ENCODE measurements at regions of chr9 and their contacts with region 1.

Region 1: GRCh38 chr9:16705121-16705604 is 165.3 kb downstream of the BNC2 start:
- DNase-seq: peak; percentile 99
- H3K4me3 ChIP-seq: peak overlapping the region in 2 of 3 experiments; percentile 57 to 97
- H3K27ac ChIP-seq: peak overlapping the region; percentile 99
- H3K4me1 ChIP-seq: peaks cover 51% of the 10 kb centered on the region
- H3K27me3 ChIP-seq: no peaks in the 10 kb centered on the region
- CTCF ChIP-seq: no peak
- POLR2A ChIP-seq: peak; percentile 44

Region 2: DNA sequence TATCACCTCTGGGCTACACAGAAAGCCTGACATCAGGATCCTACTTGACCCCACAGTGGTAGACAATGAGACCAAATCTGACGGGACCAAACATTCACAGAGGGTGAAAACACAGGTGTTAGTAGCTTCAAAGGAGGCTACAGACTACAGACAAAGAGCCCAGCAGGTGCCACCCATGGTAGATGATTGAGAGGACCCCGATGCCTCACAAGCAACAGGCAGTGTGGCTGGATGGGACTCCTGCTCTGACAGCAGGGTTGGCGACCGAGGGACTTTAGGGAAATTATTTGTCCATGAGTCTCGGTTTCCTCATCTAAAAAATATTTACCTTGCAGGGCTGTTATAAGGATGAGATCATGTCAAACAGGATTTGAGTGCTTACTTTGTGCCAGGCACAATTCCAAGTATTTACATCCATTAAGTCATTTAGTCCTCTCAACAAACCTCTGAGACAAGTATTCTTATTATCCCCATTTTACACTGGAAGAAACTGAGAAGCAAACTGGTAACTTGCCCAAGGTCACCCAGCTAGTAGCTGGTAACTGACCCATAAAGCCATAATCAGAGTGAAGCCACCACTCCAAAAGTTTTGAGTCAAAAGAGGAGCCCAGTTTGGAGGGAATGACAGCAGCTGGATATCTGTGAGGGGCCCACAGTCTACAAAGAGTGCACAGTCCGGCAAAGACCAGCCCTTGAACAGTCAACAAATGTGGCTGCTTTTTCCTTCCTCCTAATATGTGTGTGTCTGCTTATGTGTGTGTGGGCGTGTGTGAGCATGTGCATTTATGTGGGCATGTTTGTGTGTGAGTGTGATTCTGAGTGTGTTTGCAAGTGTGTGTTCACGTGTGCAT is 336.7 kb before region 1 on chr9:
- CTCF ChIA-PET with region 1: no interaction called
- POLR2A ChIA-PET with region 1: no interaction called
- dilution Hi-C with region 1: no loop called
- intact Hi-C with region 1: loop called (anchors 2 kb)
- DNase-seq: peak; percentile 28
- H3K4me3 ChIP-seq: no peak overlapping the region
- H3K27ac ChIP-seq: no peak overlapping the region
- H3K4me1 ChIP-seq: peaks cover 27% of the 10 kb centered on the region
- H3K27me3 ChIP-seq: no peaks in the 10 kb centered on the region
- CTCF ChIP-seq: no peak
- POLR2A ChIP-seq: no peak

Region 3: GRCh38 chr9:16530669-16531642 is 174.2 kb before region 1 on chr9:
- CTCF ChIA-PET with region 1: no interaction called
- POLR2A ChIA-PET with region 1: no interaction called
- dilution Hi-C with region 1: no loop called
- intact Hi-C with region 1: loop called (anchors 5 kb)
- DNase-seq: no peak
- H3K4me3 ChIP-seq: no peak overlapping the region
- H3K27ac ChIP-seq: no peak overlapping the region
- H3K4me1 ChIP-seq: peaks cover 34% of the 10 kb centered on the region
- H3K27me3 ChIP-seq: no peaks in the 10 kb centered on the region
- CTCF ChIP-seq: no peak
- POLR2A ChIP-seq: no peak

Region 4: GRCh38 chr9:16720386-16720785 is 15.2 kb after region 1 on chr9:
- CTCF ChIA-PET with region 1: interaction called, 19 read pairs
- POLR2A ChIA-PET with region 1: no interaction called
- dilution Hi-C with region 1: no loop called
- intact Hi-C with region 1: loop called (anchors 1 kb)
- DNase-seq: peak; percentile 78
- H3K4me3 ChIP-seq: peak overlapping the region in 1 of 3 experiments; percentile 16
- H3K27ac ChIP-seq: peak overlapping the region; percentile 90
- H3K4me1 ChIP-seq: peaks cover 34% of the 10 kb centered on the region
- H3K27me3 ChIP-seq: no peaks in the 10 kb centered on the region
- CTCF ChIP-seq: no peak
- POLR2A ChIP-seq: peak; percentile 22

Region 5: GRCh38 chr9:16794871-16795639 is 89.9 kb after region 1 on chr9:
- CTCF ChIA-PET with region 1: no interaction called
- POLR2A ChIA-PET with region 1: no interaction called
- dilution Hi-C with region 1: no loop called
- intact Hi-C with region 1: no loop called
- DNase-seq: peak; percentile 45
- H3K4me3 ChIP-seq: no peak overlapping the region
- H3K27ac ChIP-seq: no peak overlapping the region
- H3K4me1 ChIP-seq: peaks cover 8% of the 10 kb centered on the region
- H3K27me3 ChIP-seq: no peaks in the 10 kb centered on the region
- CTCF ChIP-seq: no peak
- POLR2A ChIP-seq: no peak